ENCODE measurements at regions of chr14 and their contacts with region 1.

Region 1: DNA sequence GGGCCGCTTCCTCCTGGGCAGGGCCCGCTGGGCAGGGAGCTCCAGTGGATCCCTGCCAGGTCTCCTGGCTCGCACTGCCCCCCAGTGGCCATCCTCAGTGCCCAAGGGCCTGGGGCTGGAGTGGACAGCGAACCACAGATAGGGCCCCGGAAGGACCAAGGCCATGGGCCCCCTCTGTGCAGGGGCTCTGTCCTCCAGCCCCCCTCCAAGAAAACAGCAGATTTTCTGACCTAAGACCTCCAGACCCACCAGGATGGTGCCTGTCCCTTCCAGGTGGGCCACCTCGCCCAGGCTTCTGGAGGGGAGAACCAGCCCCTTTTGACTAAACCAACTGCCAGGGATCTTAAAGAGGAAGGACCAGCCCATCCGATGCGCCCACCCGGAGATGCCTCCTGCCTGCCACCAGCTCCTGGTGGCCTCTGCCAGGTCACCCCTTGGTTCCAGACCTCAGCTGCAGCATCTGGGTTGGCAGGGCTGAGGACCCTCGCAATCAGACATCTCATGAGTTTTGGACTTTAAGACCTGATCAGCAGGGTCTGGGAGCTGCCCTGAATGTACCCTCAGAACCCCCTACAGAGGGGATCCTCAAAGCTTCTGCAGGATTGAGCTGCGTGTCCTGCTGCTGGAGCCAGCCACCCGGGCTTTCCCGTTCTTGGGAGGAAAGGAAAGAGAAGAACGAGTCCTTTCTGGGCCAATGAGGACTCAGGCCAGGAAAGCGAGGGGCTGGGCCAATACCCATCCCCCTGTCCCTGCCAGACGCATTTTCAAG is 325.8 kb upstream of the DIO3 start:
- DNase-seq: peak; percentile 70
- ATAC-seq: no peak
- H3K4me3 Mint-ChIP-seq: no peak overlapping the region
- H3K27ac Mint-ChIP-seq: no peak overlapping the region
- H3K4me1 Mint-ChIP-seq: no peaks in the 10 kb centered on the region
- H3K27me3 Mint-ChIP-seq: peaks cover 7% of the 10 kb centered on the region

Region 2: GRCh38 chr14:100850841-100851585 is 384.5 kb before region 1 on chr14:
- CTCF ChIA-PET with region 1: interaction called, 4 read pairs
- POLR2A ChIA-PET with region 1: no interaction called
- intact Hi-C with region 1: loop called (anchors 1 to 2 kb)
- DNase-seq: peak; percentile 91
- ATAC-seq: peak; percentile 92
- H3K4me3 Mint-ChIP-seq: no peak overlapping the region
- H3K27ac Mint-ChIP-seq: no peak overlapping the region
- H3K4me1 Mint-ChIP-seq: no peaks in the 10 kb centered on the region
- H3K27me3 Mint-ChIP-seq: no peaks in the 10 kb centered on the region

Region 3: GRCh38 chr14:100906420-100906819 is 329.1 kb before region 1 on chr14:
- CTCF ChIA-PET with region 1: no interaction called
- POLR2A ChIA-PET with region 1: no interaction called
- intact Hi-C with region 1: loop called in 1 of 2 experiments (anchors 2 kb)
- DNase-seq: no peak
- ATAC-seq: no peak
- H3K4me3 Mint-ChIP-seq: no peak overlapping the region
- H3K27ac Mint-ChIP-seq: no peak overlapping the region
- H3K4me1 Mint-ChIP-seq: no peaks in the 10 kb centered on the region
- H3K27me3 Mint-ChIP-seq: peaks cover 24% of the 10 kb centered on the region

Region 4: GRCh38 chr14:101635749-101636560 is 400.4 kb after region 1 on chr14:
- CTCF ChIA-PET with region 1: no interaction called
- POLR2A ChIA-PET with region 1: no interaction called
- intact Hi-C with region 1: no loop called
- DNase-seq: peak; percentile 80
- ATAC-seq: peak; percentile 99
- H3K4me3 Mint-ChIP-seq: no peak overlapping the region
- H3K27ac Mint-ChIP-seq: no peak overlapping the region
- H3K4me1 Mint-ChIP-seq: peaks cover 18% of the 10 kb centered on the region
- H3K27me3 Mint-ChIP-seq: peaks cover 29% of the 10 kb centered on the region

Measured in activated CD4-positive, alpha-beta T cell treated with anti-CD3 and anti-CD28 coated beads for 36 hours (primary cell).